ENCODE measurements at regions of chr15 and their contacts with region 1.

Region 1: DNA sequence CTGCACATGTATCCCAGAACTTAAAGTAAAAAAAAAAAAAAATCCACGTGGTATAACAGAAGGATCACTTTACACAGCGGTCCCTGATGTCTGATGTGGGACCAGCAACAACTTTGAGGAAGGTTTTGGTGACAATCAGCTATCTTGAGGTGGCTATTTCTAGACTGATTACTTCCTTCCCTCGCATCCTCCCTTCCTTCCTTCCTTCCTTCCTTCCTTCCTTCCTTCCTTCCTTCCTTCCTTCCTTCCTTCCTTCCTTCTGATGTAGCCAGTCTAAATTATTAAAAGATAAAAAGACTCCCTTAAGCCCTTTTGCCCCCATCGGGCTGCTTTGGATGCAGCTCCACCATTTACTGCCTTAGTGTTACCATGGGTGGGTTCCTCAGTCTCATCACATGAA is 14.9 kb downstream of the SORD start:
- DNase-seq: no peak
- H3K4me3 Mint-ChIP-seq: no peak overlapping the region
- H3K27ac Mint-ChIP-seq: no peak overlapping the region
- H3K4me1 Mint-ChIP-seq: peaks cover 9% of the 10 kb centered on the region
- H3K27me3 Mint-ChIP-seq: no peaks in the 10 kb centered on the region

Region 2: GRCh38 chr15:44956388-44956787 is 81.5 kb before region 1 on chr15 and contains the start of gene TERB2:
- CTCF ChIA-PET with region 1: no interaction called
- POLR2A ChIA-PET with region 1: no interaction called
- intact Hi-C with region 1: loop called (anchors 5 kb)
- DNase-seq: no peak
- H3K4me3 Mint-ChIP-seq: no peak within 1 kb of the TSS
- H3K27ac Mint-ChIP-seq: no peak within 1 kb of the TSS
- H3K4me1 Mint-ChIP-seq: no peaks in the 10 kb centered on the region
- H3K27me3 Mint-ChIP-seq: no peaks in the 10 kb centered on the region
- total RNA-seq, gene TERB2: not detected

Region 3: DNA sequence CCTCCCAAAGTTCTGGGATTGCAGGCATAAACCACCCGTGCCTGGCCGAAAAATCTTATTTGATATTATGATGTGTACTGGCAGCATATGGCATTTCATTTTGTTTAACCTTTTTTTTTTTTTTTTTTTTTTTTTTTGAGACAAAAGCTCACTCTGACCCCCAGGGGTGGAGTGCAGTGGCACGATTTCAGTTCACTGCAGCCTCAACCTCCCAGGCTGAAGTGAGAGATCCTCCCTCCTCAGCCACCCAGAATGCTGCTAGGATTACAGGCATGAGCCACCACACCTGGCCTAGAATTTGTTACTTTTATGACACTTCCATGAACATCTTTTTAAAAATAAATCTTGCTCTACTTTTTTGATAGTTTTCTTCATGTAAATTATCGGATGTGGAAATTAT is 69.5 kb before region 1 on chr15:
- CTCF ChIA-PET with region 1: interaction called, 24 read pairs
- POLR2A ChIA-PET with region 1: no interaction called
- intact Hi-C with region 1: loop called (anchors 5 kb)
- DNase-seq: no peak
- H3K4me3 Mint-ChIP-seq: no peak overlapping the region
- H3K27ac Mint-ChIP-seq: no peak overlapping the region
- H3K4me1 Mint-ChIP-seq: no peaks in the 10 kb centered on the region
- H3K27me3 Mint-ChIP-seq: no peaks in the 10 kb centered on the region

Region 4: GRCh38 chr15:45064386-45064785 is 26.4 kb after region 1 on chr15:
- CTCF ChIA-PET with region 1: no interaction called
- POLR2A ChIA-PET with region 1: no interaction called
- intact Hi-C with region 1: no loop called
- DNase-seq: no peak
- H3K4me3 Mint-ChIP-seq: no peak overlapping the region
- H3K27ac Mint-ChIP-seq: no peak overlapping the region
- H3K4me1 Mint-ChIP-seq: peaks cover 7% of the 10 kb centered on the region
- H3K27me3 Mint-ChIP-seq: no peaks in the 10 kb centered on the region

Region 5: GRCh38 chr15:45169608-45170480 is 131.9 kb after region 1 on chr15:
- CTCF ChIA-PET with region 1: no interaction called
- POLR2A ChIA-PET with region 1: no interaction called
- intact Hi-C with region 1: no loop called
- DNase-seq: no peak
- H3K4me3 Mint-ChIP-seq: no peak overlapping the region
- H3K27ac Mint-ChIP-seq: no peak overlapping the region
- H3K4me1 Mint-ChIP-seq: peaks cover 13% of the 10 kb centered on the region
- H3K27me3 Mint-ChIP-seq: no peaks in the 10 kb centered on the region

Region 6: GRCh38 chr15:45253330-45253729 is 215.4 kb after region 1 on chr15:
- CTCF ChIA-PET with region 1: no interaction called
- POLR2A ChIA-PET with region 1: no interaction called
- intact Hi-C with region 1: no loop called
- DNase-seq: no peak
- H3K4me3 Mint-ChIP-seq: no peak overlapping the region
- H3K27ac Mint-ChIP-seq: no peak overlapping the region
- H3K4me1 Mint-ChIP-seq: no peaks in the 10 kb centered on the region
- H3K27me3 Mint-ChIP-seq: no peaks in the 10 kb centered on the region